ENCODE measurements at regions of chr17 and their contacts with region 1.

Region 1: GRCh38 chr17:68184816-68185436 is 62.9 kb upstream of the AMZ2 start:
- DNase-seq: peak; percentile 43
- ATAC-seq: peak; percentile 78
- H3K4me3 Mint-ChIP-seq: peak overlapping the region; percentile 66
- H3K27ac Mint-ChIP-seq: peak overlapping the region; percentile 78
- H3K4me1 Mint-ChIP-seq: peaks cover 45% of the 10 kb centered on the region
- H3K27me3 Mint-ChIP-seq: peaks cover 6% of the 10 kb centered on the region

Region 2: GRCh38 chr17:68048996-68049395 is 135.9 kb before region 1 on chr17:
- POLR2A ChIA-PET with region 1: interaction called, 10 read pairs
- DNase-seq: peak; percentile 4
- ATAC-seq: no peak
- H3K4me3 Mint-ChIP-seq: no peak overlapping the region
- H3K27ac Mint-ChIP-seq: no peak overlapping the region
- H3K4me1 Mint-ChIP-seq: peaks cover 7% of the 10 kb centered on the region
- H3K27me3 Mint-ChIP-seq: no peaks in the 10 kb centered on the region

Region 3: DNA sequence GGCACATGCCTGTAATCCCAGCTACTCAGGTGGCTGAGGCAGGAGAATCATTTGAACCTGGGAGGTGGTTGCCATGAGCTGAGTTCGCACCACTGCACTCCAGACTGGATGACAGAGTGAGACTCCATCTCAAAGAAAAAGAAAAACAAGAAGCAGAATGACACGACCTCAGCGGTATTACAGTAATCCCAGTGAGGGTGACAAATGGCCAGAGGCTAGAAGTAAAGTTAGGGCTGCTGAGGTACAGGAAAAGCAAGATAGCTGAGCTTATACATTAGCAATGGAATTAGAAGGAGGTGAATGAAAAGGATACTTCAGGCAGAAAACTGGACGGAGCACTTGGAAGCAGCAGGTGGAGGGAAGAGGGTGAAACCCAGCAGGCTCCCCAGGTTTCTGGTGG is 36.8 kb after region 1 on chr17:
- POLR2A ChIA-PET with region 1: no interaction called
- DNase-seq: no peak
- ATAC-seq: no peak
- H3K4me3 Mint-ChIP-seq: no peak overlapping the region
- H3K27ac Mint-ChIP-seq: no peak overlapping the region
- H3K4me1 Mint-ChIP-seq: no peaks in the 10 kb centered on the region
- H3K27me3 Mint-ChIP-seq: no peaks in the 10 kb centered on the region

Region 4: GRCh38 chr17:68482576-68483041 is 297.7 kb after region 1 on chr17:
- POLR2A ChIA-PET with region 1: no interaction called
- DNase-seq: no peak
- ATAC-seq: no peak
- H3K4me3 Mint-ChIP-seq: no peak overlapping the region
- H3K27ac Mint-ChIP-seq: no peak overlapping the region
- H3K4me1 Mint-ChIP-seq: peaks cover 13% of the 10 kb centered on the region
- H3K27me3 Mint-ChIP-seq: peaks cover 42% of the 10 kb centered on the region